ENCODE measurements at regions of chr17 and their contacts with region 1.

Region 1: DNA sequence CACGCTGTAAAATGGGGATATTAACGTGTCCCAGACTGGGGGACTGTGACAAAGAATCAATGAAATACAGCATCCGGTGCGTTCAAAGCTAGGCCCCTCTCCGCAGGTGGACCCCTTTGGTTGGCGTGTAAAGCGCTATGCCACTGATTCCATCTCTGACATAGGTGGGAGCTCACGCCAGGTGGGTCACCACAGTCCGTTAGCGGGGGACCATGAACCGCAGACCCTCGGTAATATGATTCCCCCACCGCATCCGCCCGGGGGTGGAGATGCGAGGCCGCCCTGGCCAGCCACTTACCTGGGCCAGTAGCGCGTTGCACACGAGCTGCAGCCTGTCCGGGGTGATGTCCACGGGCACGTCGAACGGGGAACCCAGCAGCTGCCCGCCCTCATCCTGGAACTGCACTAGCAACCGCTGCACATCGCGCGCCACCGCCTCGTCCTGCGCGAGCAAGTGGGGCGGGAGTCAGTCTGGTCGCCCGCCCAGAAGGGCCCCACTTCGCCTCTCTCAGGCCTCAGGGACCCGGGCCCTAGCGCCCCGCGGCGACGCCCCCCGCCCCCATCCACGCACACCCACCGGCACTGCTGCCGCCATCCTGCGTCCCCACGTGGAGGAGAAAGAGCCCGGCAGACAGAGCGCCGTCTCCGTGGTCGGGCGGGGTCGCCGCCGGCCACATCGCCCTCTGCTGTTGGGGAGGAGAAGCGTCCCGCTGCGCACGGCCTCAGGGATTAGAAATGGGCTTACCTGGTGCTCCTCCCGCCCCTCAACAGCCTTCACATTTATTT is at the start of gene NLE1:
- DNase-seq: peak; percentile 82 to 93 (median 88)
- ATAC-seq: peak; percentile 97
- H3K4me3 ChIP-seq: peak within 1 kb of the TSS; percentile 98 to 99
- H3K4me3 Mint-ChIP-seq: peak within 1 kb of the TSS; percentile 85
- H3K27ac ChIP-seq: peak within 1 kb of the TSS; percentile 54 to 72
- H3K27ac Mint-ChIP-seq: peak within 1 kb of the TSS; percentile 76
- H3K4me1 ChIP-seq: peaks cover 8% of the 10 kb centered on the region
- H3K4me1 Mint-ChIP-seq: peaks cover 17% of the 10 kb centered on the region
- H3K27me3 ChIP-seq: no peaks in the 10 kb centered on the region
- H3K27me3 Mint-ChIP-seq: no peaks in the 10 kb centered on the region
- CTCF ChIP-seq: peak; percentile 97
- total RNA-seq, gene NLE1: 9.4 to 11.3 TPM

Region 2: DNA sequence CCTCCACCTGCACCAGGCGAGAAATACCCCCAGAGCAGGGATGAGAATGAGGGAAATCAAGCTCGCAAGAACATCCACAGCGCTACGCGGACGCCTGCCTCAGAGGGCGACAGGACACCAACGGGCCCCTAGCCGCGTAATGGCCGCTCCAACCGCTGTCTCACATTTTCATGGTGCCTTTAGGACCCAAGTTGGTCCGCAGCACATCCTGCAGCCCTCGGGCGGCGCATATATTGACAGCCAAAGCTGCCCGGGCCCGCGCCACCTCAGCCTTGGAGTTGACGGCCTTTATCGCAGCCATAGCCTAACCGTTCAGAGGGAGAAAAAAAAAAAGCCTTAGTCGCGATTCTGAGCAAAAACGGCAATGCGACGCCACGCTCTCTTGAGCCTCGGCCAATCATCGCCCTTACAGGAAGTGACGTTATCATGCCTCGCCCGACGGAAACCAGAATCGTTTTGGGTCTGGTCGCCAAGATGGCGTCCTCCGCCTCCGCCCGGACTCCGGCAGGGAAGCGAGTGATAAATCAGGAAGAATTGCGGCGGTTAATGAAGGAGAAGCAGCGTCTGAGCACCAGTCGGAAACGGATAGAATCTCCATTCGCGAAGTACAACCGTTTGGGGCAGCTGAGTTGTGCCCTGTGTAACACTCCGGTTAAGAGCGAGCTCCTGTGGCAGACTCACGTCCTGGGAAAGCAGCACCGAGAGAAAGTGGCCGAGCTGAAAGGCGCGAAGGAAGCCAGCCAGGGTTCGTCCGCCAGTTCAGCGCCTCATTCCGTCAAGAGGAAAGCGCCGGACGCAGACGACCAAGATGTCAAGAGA is 180.6 kb before region 1 on chr17 and contains the starts of genes CCT6B and ZNF830:
- CTCF ChIA-PET with region 1: no interaction called
- POLR2A ChIA-PET with region 1: no interaction called
- intact Hi-C with region 1: loop called in 1 of 2 experiments (anchors 1 kb)
- DNase-seq: peak; percentile 75 to 97 (median 92)
- ATAC-seq: peak; percentile 88
- H3K4me3 ChIP-seq: peak within 1 kb of the TSS; percentile 72 to 78
- H3K4me3 Mint-ChIP-seq: peak within 1 kb of the TSS; percentile 100
- H3K27ac ChIP-seq: peak within 1 kb of the TSS; percentile 84 to 99
- H3K27ac Mint-ChIP-seq: peak within 1 kb of the TSS; percentile 99
- H3K4me1 ChIP-seq: peaks cover 22% of the 10 kb centered on the region
- H3K4me1 Mint-ChIP-seq: peaks cover 40% of the 10 kb centered on the region
- H3K27me3 ChIP-seq: no peaks in the 10 kb centered on the region
- H3K27me3 Mint-ChIP-seq: peaks cover 6% of the 10 kb centered on the region
- CTCF ChIP-seq: no peak
- total RNA-seq, gene CCT6B: 4.0 to 5.9 TPM
- total RNA-seq, gene ZNF830: 43.6 to 45.0 TPM

Region 3: DNA sequence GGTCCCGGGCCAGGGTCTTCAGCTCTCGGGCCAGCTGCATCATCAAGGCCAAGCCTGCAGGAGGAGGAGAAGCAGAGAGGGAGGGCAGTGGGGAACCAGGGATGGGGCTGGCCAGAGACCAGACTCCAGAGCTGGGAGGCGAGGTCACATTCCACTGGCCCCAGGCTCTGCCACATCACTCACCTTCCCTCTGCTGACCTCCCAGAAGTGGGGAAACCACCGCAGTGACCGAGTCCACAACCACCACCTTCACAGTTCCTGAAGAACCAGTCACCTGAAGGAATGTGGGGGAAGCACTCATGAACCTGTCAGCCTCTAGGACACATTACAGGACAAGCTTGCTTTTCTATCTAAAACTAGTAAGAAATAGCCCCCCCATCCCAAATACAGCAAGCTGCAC is 38.6 kb before region 1 on chr17:
- CTCF ChIA-PET with region 1: no interaction called
- POLR2A ChIA-PET with region 1: no interaction called
- intact Hi-C with region 1: no loop called
- DNase-seq: no peak
- ATAC-seq: no peak
- H3K4me3 ChIP-seq: no peak overlapping the region
- H3K4me3 Mint-ChIP-seq: no peak overlapping the region
- H3K27ac ChIP-seq: no peak overlapping the region
- H3K27ac Mint-ChIP-seq: no peak overlapping the region
- H3K4me1 ChIP-seq: no peaks in the 10 kb centered on the region
- H3K4me1 Mint-ChIP-seq: no peaks in the 10 kb centered on the region
- H3K27me3 ChIP-seq: no peaks in the 10 kb centered on the region
- H3K27me3 Mint-ChIP-seq: no peaks in the 10 kb centered on the region
- CTCF ChIP-seq: no peak

Region 4: DNA sequence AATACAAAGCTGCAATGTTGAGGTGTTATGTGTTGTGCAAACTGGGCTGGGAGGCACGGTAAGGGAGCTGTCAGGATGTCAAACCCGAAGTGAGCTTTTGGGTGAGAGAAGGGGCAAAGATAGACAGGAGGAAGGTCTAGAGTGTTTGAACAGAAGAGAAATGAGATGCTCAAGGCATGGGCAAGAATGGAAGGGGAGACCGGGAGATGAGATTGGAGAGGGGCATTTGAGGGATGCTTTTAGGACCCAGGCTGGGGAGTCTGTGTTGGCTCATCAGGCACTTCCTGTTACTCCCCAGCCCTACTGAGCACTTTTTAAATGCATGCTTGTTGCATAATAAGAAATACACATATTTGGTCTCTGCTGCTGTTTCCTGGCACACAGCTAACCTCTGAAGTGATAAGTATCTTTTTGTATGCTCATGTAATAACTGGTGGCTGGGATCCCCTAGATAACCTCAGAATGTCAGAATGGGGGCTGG is 19.4 kb after region 1 on chr17:
- CTCF ChIA-PET with region 1: interaction called, 8 read pairs
- POLR2A ChIA-PET with region 1: interaction called, 7 read pairs
- intact Hi-C with region 1: loop called in 1 of 2 experiments (anchors 1 kb)
- DNase-seq: peak in 8 of 9 experiments; percentile 6 to 81 (median 38)
- ATAC-seq: peak; percentile 52
- H3K4me3 ChIP-seq: peak overlapping the region; percentile 5 to 25
- H3K4me3 Mint-ChIP-seq: peak overlapping the region; percentile 70
- H3K27ac ChIP-seq: peak overlapping the region; percentile 40 to 77
- H3K27ac Mint-ChIP-seq: peak overlapping the region; percentile 95
- H3K4me1 ChIP-seq: peaks cover 53% of the 10 kb centered on the region
- H3K4me1 Mint-ChIP-seq: peaks cover 58% of the 10 kb centered on the region
- H3K27me3 ChIP-seq: no peaks in the 10 kb centered on the region
- H3K27me3 Mint-ChIP-seq: no peaks in the 10 kb centered on the region
- CTCF ChIP-seq: no peak

Region 5: DNA sequence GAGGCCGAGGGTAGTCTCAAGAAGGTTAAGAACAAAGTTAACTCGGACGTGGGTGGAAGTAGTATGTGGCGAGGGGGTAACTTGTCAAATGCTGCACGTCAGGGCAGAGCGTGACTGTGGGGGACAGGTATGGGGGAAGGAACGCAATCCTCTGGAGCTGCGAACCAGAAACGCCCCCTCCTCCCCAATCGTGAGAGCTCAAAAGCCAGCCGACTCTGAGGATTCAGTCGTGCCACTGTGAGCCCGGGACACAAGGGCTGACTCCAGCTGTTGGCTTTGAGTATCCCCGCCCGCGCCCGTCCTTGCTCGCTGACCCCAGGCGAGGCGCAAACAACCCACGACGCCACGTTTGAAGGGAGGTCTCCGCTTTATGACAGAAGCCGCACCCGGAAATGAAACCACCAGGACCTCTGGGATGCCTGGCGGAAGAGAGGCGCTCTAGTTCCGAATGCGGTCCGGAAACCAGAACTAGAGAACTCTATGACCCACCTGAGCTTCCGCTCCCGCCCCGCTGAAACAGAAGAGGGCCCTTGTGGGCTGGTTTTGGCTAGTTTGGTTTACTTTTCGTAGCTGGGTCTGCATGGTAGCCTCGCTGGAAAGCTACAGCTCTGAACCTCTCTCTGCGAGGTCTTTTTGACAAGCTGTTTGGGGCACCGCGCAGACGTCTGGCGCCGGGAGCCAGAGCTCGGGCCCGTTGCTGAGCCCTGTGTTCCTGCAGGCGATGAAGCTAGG is 436.5 kb after region 1 on chr17 and contains the start of gene PEX12:
- CTCF ChIA-PET with region 1: interaction called, 4 read pairs
- POLR2A ChIA-PET with region 1: interaction called, 4 read pairs
- intact Hi-C with region 1: loop called in 1 of 2 experiments (anchors 1 kb)
- DNase-seq: peak; percentile 70 to 96 (median 89)
- ATAC-seq: peak; percentile 93
- H3K4me3 ChIP-seq: peak within 1 kb of the TSS; percentile 69 to 88
- H3K4me3 Mint-ChIP-seq: peak within 1 kb of the TSS; percentile 93
- H3K27ac ChIP-seq: peak within 1 kb of the TSS; percentile 88 to 94
- H3K27ac Mint-ChIP-seq: peak within 1 kb of the TSS; percentile 98
- H3K4me1 ChIP-seq: peaks cover 18% of the 10 kb centered on the region
- H3K4me1 Mint-ChIP-seq: peaks cover 29% of the 10 kb centered on the region
- H3K27me3 ChIP-seq: no peaks in the 10 kb centered on the region
- H3K27me3 Mint-ChIP-seq: no peaks in the 10 kb centered on the region
- CTCF ChIP-seq: no peak
- total RNA-seq, gene PEX12: 2.7 to 3.2 TPM

Region 6: DNA sequence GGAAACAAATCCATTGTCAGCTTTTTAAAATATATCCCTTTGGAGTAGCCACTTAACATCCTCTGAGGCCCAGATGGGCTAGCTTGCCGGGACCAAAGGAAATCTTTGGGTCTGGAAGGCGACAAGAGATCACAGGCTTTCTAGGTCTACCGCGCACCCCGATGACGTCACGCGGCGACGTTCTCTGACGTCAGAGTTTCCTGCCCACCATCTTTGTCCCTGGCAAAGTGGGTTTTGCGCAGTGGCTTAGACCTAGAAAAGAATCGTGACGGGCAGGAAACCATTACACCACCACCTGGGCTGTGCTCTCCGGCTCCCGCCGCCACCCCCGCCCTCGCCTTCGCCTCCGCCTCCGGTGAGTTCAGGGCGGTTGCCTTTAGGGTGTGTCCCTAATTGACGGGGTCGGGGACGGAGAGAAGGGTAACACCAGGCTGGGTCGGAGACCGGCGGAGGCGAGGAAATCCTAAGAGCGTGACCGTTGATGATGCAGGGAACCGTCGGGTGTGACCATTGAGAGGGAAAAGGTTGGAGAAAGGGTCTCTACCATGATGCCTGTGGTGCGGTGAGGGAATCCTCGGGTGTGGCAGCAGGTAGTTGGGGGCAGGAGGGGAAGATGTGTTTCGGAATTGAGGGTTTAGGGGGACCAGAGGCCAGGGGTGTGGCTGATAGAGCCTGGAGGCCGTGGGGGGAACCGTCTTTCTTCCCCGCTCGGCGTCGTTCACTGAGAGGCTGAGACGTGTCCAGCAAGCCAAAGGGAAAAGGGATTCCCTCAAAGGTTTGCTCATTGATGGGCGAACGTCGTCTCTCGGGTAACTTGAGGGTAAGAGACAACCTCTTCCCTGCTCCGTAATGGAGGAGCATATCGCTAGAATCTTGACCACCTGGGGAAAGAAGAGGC is 445.4 kb after region 1 on chr17 and contains the start of gene AP2B1:
- CTCF ChIA-PET with region 1: no interaction called
- POLR2A ChIA-PET with region 1: no interaction called
- intact Hi-C with region 1: loop called in 1 of 2 experiments (anchors 1 kb)
- DNase-seq: peak; percentile 96 to 100 (median 97)
- ATAC-seq: peak; percentile 98
- H3K4me3 ChIP-seq: peak within 1 kb of the TSS; percentile 84 to 92
- H3K4me3 Mint-ChIP-seq: peak within 1 kb of the TSS; percentile 99
- H3K27ac ChIP-seq: peak within 1 kb of the TSS; percentile 86 to 93
- H3K27ac Mint-ChIP-seq: peak within 1 kb of the TSS; percentile 98
- H3K4me1 ChIP-seq: peaks cover 21% of the 10 kb centered on the region
- H3K4me1 Mint-ChIP-seq: peaks cover 38% of the 10 kb centered on the region
- H3K27me3 ChIP-seq: no peaks in the 10 kb centered on the region
- H3K27me3 Mint-ChIP-seq: no peaks in the 10 kb centered on the region
- CTCF ChIP-seq: no peak
- total RNA-seq, gene AP2B1: 58.7 to 65.7 TPM

Measured in CD8-positive, alpha-beta T cell (primary cell).